ENCODE measurements at regions of chr7 and their contacts with region 1.

Region 1: GRCh38 chr7:104883718-104884452 is 130.1 kb upstream of the KMT2E start:
- DNase-seq: peak; percentile 79
- CTCF ChIP-seq: peak; percentile 87

Region 2: DNA sequence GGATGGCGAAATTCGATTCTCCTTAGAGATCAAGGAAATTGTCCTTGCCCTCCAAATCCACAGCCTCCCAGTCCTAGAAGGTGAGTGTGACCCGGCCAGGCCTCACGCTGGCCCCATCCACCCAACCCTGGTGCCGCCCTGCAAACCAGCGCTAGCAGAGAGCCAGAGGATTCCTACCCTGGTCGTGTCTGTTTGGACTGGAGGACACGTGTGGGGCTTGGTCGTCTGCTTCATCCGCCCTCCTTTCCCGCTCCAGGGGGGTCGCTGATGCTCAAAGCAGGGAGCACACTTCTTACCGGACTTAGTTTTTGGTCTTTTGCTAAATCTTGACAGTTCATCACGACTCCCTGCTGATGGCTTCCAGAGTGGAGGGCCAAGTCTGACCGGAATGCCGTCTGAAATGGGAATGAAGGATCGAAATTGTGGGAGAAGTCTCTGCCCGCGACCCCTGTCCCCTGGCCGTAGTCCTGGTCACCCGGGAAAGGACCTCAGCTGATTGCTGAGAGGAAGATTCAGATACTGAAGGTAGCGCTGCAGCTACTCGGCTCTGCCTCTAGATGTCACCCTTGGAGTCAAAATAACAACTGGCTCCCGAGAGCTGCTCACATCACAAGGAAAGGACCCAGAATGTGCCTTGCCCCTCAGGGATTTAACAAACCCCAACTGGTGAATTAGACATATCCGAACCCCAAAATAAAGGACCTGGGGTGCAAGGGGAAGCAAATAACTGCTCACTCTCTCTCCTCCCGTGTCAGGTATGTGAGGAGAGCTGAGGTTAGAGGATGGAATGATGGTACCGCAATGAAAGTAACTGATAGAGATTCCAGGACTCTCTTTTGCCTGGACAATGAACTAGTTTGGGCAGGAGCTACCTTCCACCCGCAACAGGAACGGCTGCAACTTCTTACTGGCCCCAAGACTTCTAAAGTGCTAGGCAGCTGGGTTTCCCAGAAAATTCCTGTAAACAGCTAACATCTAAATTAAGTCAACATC is 652.5 kb before region 1 on chr7:
- CTCF ChIA-PET with region 1: interaction called, 10 read pairs
- POLR2A ChIA-PET with region 1: no interaction called
- DNase-seq: peak; percentile 80
- CTCF ChIP-seq: peak; percentile 94

Region 3: GRCh38 chr7:104700336-104700735 is 183.5 kb before region 1 on chr7:
- CTCF ChIA-PET with region 1: no interaction called
- POLR2A ChIA-PET with region 1: no interaction called
- DNase-seq: no peak
- CTCF ChIP-seq: no peak

Region 4: GRCh38 chr7:104862719-104863118 is 21.2 kb before region 1 on chr7:
- CTCF ChIA-PET with region 1: interaction called, 24 read pairs
- POLR2A ChIA-PET with region 1: no interaction called
- DNase-seq: no peak
- CTCF ChIP-seq: no peak

Region 5: GRCh38 chr7:104873346-104873849 is 10.5 kb before region 1 on chr7:
- CTCF ChIA-PET with region 1: interaction called, 25 read pairs
- POLR2A ChIA-PET with region 1: no interaction called
- DNase-seq: no peak
- CTCF ChIP-seq: no peak

Region 6: DNA sequence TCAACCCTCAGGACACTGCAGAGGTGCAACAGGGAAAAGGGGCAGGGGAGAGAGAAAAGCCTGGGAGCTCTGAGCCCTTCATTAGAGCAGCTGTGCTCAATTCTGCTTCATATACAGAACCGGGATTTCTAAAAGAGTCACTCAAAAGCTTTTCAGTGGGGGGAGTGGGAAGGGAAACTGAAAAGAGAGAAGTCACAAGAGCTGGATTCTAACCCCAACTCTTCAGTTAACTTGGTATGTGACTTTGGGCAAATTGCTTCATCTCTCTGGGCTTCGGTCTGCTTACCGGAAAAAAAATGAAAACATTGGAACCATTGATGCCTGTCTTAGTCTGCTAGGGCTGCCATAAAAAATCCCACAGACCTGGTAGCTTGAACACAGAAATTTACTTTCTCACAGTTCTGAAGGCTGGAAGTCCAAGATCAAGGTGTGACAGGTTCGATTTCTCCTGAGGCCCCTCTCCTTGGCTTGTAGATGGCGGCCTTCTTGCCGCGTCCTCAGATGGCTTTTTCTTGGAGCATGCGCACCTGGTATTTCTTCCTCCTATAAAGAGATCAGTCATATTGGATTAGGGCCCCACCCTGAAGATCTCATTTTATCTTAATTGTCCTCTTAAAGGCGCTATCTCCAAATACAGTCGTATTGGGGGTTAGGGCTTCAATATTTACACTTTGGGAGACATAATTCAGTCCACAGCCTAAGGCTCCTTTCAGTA is 11.8 kb after region 1 on chr7:
- CTCF ChIA-PET with region 1: interaction called, 153 read pairs
- POLR2A ChIA-PET with region 1: no interaction called
- DNase-seq: no peak
- CTCF ChIP-seq: no peak

Region 7: GRCh38 chr7:104908636-104909035 is 24.8 kb after region 1 on chr7:
- CTCF ChIA-PET with region 1: interaction called, 216 read pairs
- POLR2A ChIA-PET with region 1: no interaction called
- DNase-seq: no peak
- CTCF ChIP-seq: no peak

Region 8: DNA sequence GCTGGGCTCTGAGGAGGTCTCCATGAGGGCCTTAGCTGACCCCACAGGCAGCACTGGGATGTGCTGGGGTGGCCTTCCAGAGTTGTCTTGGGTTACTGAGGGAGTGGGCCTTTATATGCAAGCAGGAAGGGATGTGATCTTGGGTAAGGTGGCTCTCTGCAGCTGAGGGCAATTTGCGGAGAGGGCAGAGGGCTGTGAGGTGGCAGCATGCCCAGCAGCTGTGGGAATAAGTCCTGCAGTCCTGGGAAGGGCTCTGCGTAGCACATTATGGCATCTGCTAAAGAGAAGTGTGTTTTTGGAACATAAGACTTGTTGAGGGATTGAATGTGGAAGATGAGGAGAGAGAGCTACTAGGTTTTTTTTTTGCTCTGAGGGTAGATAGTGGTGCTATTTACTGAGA is 30.5 kb after region 1 on chr7:
- CTCF ChIA-PET with region 1: interaction called, 216 read pairs
- POLR2A ChIA-PET with region 1: interaction called, 4 read pairs
- DNase-seq: no peak
- CTCF ChIP-seq: no peak

Region 9: DNA sequence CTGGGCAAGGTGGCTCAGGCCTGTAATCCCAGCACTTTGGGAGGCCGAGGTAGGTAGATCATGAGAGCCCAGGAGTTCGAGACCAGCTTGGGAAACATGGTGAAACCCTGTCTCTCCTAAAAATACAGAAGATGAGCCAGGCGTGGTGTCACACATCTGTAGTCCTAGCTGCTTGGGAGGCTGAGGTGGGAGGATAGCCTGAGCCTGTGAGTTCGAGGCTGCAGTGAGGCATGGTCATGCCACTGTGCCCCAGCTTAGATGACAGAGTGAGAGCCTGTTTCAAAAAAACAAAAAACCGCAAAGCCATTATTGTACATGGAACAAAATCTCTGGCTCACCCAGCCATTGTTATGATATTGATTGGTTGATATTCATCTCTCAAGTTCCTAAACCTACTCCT is 183.8 kb after region 1 on chr7:
- CTCF ChIA-PET with region 1: no interaction called
- POLR2A ChIA-PET with region 1: no interaction called
- DNase-seq: no peak
- CTCF ChIP-seq: no peak

Measured in GM10248 (cell line).